ENCODE measurements at regions of chr1 and their contacts with region 1.

Region 1: GRCh38 chr1:156456622-156457465 is 43.7 kb downstream of the MEF2D start:
- DNase-seq: peak; percentile 99
- ATAC-seq: peak; percentile 90
- H3K4me3 Mint-ChIP-seq: peak overlapping the region; percentile 91
- H3K27ac Mint-ChIP-seq: peak overlapping the region; percentile 99
- H3K4me1 Mint-ChIP-seq: peaks cover 19% of the 10 kb centered on the region
- H3K27me3 Mint-ChIP-seq: no peaks in the 10 kb centered on the region
- CTCF ChIP-seq: peak; percentile 1

Region 2: GRCh38 chr1:156146020-156146768 is 310.6 kb before region 1 on chr1:
- CTCF ChIA-PET with region 1: no interaction called
- POLR2A ChIA-PET with region 1: no interaction called
- intact Hi-C with region 1: no loop called
- DNase-seq: peak; percentile 68
- ATAC-seq: peak; percentile 74
- H3K4me3 Mint-ChIP-seq: peak overlapping the region; percentile 58
- H3K27ac Mint-ChIP-seq: peak overlapping the region; percentile 90
- H3K4me1 Mint-ChIP-seq: peaks cover 52% of the 10 kb centered on the region
- H3K27me3 Mint-ChIP-seq: no peaks in the 10 kb centered on the region
- CTCF ChIP-seq: peak; percentile 68

Region 3: GRCh38 chr1:156601122-156601830 is 144.4 kb after region 1 on chr1 and contains the start of gene GPATCH4:
- CTCF ChIA-PET with region 1: interaction called, 6 read pairs
- POLR2A ChIA-PET with region 1: interaction called, 5 read pairs
- intact Hi-C with region 1: loop called (anchors 5 kb)
- DNase-seq: peak; percentile 91
- ATAC-seq: peak; percentile 77
- H3K4me3 Mint-ChIP-seq: peak within 1 kb of the TSS; percentile 93
- H3K27ac Mint-ChIP-seq: peak within 1 kb of the TSS; percentile 97
- H3K4me1 Mint-ChIP-seq: peaks cover 32% of the 10 kb centered on the region
- H3K27me3 Mint-ChIP-seq: no peaks in the 10 kb centered on the region
- CTCF ChIP-seq: no peak
- total RNA-seq, gene GPATCH4: 50.7 to 51.0 TPM

Measured in activated CD8-positive, alpha-beta T cell treated with anti-CD3 and anti-CD28 coated beads for 36 hours (primary cell).